PC-9 (cell line): ENCODE measurements at regions of chr7 and their contacts with region 1.

Region 1: DNA sequence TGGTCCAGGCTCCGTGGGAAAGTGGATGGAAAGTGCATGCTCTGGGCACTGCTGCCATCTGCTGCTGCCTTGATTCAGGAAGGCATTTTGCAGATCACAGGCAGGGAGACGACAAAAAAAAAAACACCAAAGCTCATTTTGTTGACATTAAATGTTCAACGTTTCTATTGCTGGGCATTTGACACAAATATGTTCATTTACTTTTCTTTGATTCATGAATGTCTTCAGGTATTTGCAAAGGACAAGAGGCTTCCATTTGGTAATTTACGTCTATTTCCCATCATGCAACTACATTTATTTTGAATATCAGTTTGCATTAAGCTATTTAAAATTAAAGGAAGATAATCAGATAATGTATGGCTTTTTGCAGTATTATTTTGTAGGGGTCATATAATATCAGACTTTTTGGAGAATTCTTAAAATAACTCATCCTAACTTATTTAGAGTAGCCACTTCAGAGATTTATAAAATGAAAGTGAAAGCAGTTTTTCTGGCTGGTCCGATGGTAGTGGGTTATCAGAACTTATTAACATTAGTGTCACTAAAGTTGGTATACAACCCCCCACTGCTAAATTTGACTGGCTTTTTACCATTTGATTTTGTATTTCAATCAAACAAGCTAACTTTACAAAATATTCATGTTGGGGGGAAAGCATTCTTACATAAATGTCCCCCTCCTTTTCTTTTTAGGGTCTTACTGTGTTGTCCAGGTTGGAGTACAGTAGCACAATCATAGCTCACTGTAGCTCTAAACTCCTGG is 65.3 kb downstream of the PDIA4 start:
- DNase-seq: peak; percentile 47 to 62
- H3K4me3 ChIP-seq: peak overlapping the region; percentile 56
- H3K27ac ChIP-seq: no peak overlapping the region
- H3K4me1 ChIP-seq: no peaks in the 10 kb centered on the region
- H3K27me3 ChIP-seq: no peaks in the 10 kb centered on the region
- CTCF ChIP-seq: peak; percentile 85

Region 2: GRCh38 chr7:148503875-148504487 is 459.0 kb before region 1 on chr7:
- CTCF ChIA-PET with region 1: interaction called, 3 read pairs
- POLR2A ChIA-PET with region 1: no interaction called
- intact Hi-C with region 1: loop called (anchors 1 kb)
- DNase-seq: no peak
- H3K4me3 ChIP-seq: no peak overlapping the region
- H3K27ac ChIP-seq: no peak overlapping the region
- H3K4me1 ChIP-seq: no peaks in the 10 kb centered on the region
- H3K27me3 ChIP-seq: peaks cover 73% of the 10 kb centered on the region
- CTCF ChIP-seq: peak; percentile 87

Region 3: DNA sequence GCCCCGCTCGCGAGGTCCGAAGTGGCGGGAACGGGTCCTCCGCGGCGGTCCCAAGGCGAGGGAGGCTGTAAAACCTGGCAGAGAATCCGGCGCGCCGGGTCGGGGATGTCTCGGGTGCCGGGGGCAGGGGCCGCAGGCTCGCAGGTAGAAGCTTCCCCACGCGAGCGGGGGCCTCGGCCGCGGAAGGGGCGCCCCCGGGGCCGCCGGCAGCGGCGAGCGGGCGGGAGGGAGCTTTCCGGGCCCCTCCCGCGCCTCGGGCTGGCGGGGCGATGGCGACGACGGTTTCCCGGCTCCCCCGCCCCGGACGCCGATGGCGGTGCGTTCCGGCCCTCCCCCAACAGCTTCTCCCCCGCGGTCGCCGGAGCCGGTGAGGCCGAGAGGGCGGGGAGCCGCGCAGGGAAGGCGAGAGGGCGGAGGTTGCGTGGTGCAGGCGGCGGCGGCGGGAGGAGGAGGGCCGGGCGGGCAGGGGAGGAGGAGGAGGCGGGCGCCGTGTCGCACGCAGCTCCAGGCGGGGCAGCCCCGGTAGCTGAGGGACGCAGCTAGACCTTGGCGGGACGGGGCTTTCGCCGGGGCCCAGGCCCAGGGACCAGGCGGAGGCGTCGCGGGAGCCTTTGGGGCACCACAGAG is 264.5 kb before region 1 on chr7 and contains the start of gene CUL1:
- CTCF ChIA-PET with region 1: no interaction called
- POLR2A ChIA-PET with region 1: no interaction called
- intact Hi-C with region 1: loop called (anchors 5 kb)
- DNase-seq: peak; percentile 64 to 92
- H3K4me3 ChIP-seq: peak within 1 kb of the TSS; percentile 76
- H3K27ac ChIP-seq: peak within 1 kb of the TSS; percentile 79
- H3K4me1 ChIP-seq: peaks cover 39% of the 10 kb centered on the region
- H3K27me3 ChIP-seq: no peaks in the 10 kb centered on the region
- CTCF ChIP-seq: no peak
- total RNA-seq, gene CUL1: 54.7 and 78.3 TPM in 2 replicates

Region 4: GRCh38 chr7:148819697-148820360 is 143.2 kb before region 1 on chr7:
- CTCF ChIA-PET with region 1: no interaction called
- POLR2A ChIA-PET with region 1: no interaction called
- intact Hi-C with region 1: no loop called
- DNase-seq: peak in 1 of 2 experiments; percentile 40
- H3K4me3 ChIP-seq: no peak overlapping the region
- H3K27ac ChIP-seq: peak overlapping the region; percentile 15; the same call in 1 of the 2 replicates
- H3K4me1 ChIP-seq: peaks cover 6% of the 10 kb centered on the region; the same call in 1 of the 2 replicates
- H3K27me3 ChIP-seq: no peaks in the 10 kb centered on the region
- CTCF ChIP-seq: no peak

Region 5: GRCh38 chr7:148940702-148941597 is 22.1 kb before region 1 on chr7:
- CTCF ChIA-PET with region 1: interaction called, 4 read pairs
- POLR2A ChIA-PET with region 1: no interaction called
- intact Hi-C with region 1: loop called (anchors 1 kb)
- DNase-seq: peak; percentile 63 to 72
- H3K4me3 ChIP-seq: peak overlapping the region; percentile 74
- H3K27ac ChIP-seq: peak overlapping the region; percentile 84
- H3K4me1 ChIP-seq: peaks cover 27% of the 10 kb centered on the region
- H3K27me3 ChIP-seq: no peaks in the 10 kb centered on the region
- CTCF ChIP-seq: no peak

Region 6: DNA sequence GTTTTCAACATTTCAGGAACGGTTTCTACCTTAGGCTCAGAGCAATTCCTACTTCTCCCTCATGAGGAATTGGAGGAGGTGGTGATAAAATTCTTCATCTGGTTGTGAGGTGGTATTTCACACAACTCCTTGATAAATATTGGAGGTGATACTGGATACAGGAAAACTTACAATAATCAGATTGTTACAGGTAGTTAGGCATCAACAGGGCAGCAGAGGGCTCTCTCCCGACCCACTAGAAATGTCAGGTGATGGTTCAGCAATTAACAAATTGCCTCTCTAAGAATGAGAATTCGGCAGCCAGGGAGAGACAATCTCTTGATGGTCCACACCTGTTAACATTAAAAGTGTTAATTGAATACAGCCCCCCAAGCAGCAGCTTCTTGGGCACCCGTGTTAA is 104.9 kb after region 1 on chr7:
- CTCF ChIA-PET with region 1: interaction called, 5 read pairs
- POLR2A ChIA-PET with region 1: no interaction called
- intact Hi-C with region 1: loop called (anchors 1 kb)
- DNase-seq: no peak
- H3K4me3 ChIP-seq: no peak overlapping the region
- H3K27ac ChIP-seq: no peak overlapping the region
- H3K4me1 ChIP-seq: peaks cover 4% of the 10 kb centered on the region; the same call in 1 of the 2 replicates
- H3K27me3 ChIP-seq: no peaks in the 10 kb centered on the region
- CTCF ChIP-seq: peak; percentile 47; the same call in 1 of the 2 replicates

Region 7: GRCh38 chr7:149742075-149742701 is 779.2 kb after region 1 on chr7:
- CTCF ChIA-PET with region 1: no interaction called
- POLR2A ChIA-PET with region 1: no interaction called
- intact Hi-C with region 1: loop called (anchors 10 kb)
- DNase-seq: peak in 1 of 2 experiments; percentile 76
- H3K4me3 ChIP-seq: peak overlapping the region; percentile 54
- H3K27ac ChIP-seq: no peak overlapping the region
- H3K4me1 ChIP-seq: peaks cover 7% of the 10 kb centered on the region; the same call in 1 of the 2 replicates
- H3K27me3 ChIP-seq: 0 out of 2 replicates have a peak, but pooled peaks cover 12% of the 10 kb centered on the region
- CTCF ChIP-seq: peak; percentile 96